ENCODE measurements at regions of chr1 and their contacts with region 1.

Region 1: GRCh38 chr1:234065794-234066447 is 161.4 kb downstream of the SLC35F3 start:
- DNase-seq: peak; percentile 48 to 89
- ATAC-seq: peak; percentile 57

Region 2: GRCh38 chr1:233440951-233441401 is 624.9 kb before region 1 on chr1:
- intact Hi-C with region 1: loop called in 1 of 2 experiments (anchors 10 kb)
- DNase-seq: no peak
- ATAC-seq: peak; percentile 56

Region 3: GRCh38 chr1:234176000-234176399 is 110.1 kb after region 1 on chr1:
- intact Hi-C with region 1: no loop called
- DNase-seq: no peak
- ATAC-seq: no peak

Measured in left colon (tissue), 2 donors.